H1 (cell line): ENCODE measurements at regions of chr15 and their contacts with region 1.

Region 1: GRCh38 chr15:51776952-51777574 is 25.7 kb downstream of the TMOD2 start:
- DNase-seq: peak in 1 of 2 experiments; percentile 63
- H3K4me3 ChIP-seq: no peak overlapping the region
- H3K27ac ChIP-seq: no peak overlapping the region
- H3K4me1 ChIP-seq: peaks cover 0 to 2% (median 0%) of the 10 kb centered on the region in 4 experiments; a peak in 2 of 7 replicates
- H3K27me3 ChIP-seq: no peaks in the 10 kb centered on the region
- CTCF ChIP-seq: peak in 2 of 3 experiments; percentile 85 to 87; a peak in 3 of 4 replicates
- EP300 ChIP-seq: no peak
- POLR2A ChIP-seq: no peak
- RAD21 ChIP-seq: peak; percentile 61 to 71

Region 2: GRCh38 chr15:51641528-51642130 is 135.4 kb before region 1 on chr15:
- CTCF ChIA-PET with region 1: interaction called, 243 read pairs
- POLR2A ChIA-PET with region 1: no interaction called
- DNase-seq: no peak
- H3K4me3 ChIP-seq: no peak overlapping the region
- H3K27ac ChIP-seq: no peak overlapping the region
- H3K4me1 ChIP-seq: no peaks in the 10 kb centered on the region
- H3K27me3 ChIP-seq: no peaks in the 10 kb centered on the region; a peak in 2 of 7 replicates
- CTCF ChIP-seq: no peak
- EP300 ChIP-seq: no peak
- POLR2A ChIP-seq: no peak
- RAD21 ChIP-seq: no peak

Region 3: DNA sequence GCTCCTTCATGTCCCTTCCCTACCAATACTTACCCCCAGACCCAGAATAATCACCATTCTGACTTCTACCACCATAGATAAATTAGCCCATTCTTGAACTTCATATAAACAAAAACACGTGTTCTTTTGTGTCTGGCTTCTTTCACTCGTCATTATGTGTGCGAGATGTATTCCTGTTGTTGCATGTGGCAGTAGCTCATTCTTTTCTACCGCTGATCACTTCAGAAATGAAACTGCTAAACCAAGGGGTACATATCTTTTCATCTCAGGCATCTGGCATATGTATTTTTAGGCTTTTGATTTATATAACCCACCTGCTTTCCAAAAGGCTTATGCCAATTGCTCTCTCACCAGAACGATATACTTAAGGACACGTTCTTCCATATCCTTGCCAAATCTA is 109.6 kb before region 1 on chr15:
- CTCF ChIA-PET with region 1: interaction called, 13 read pairs
- POLR2A ChIA-PET with region 1: no interaction called
- DNase-seq: no peak
- H3K4me3 ChIP-seq: no peak overlapping the region
- H3K27ac ChIP-seq: no peak overlapping the region
- H3K4me1 ChIP-seq: peaks cover 0 to 3% (median 0%) of the 10 kb centered on the region in 4 experiments; a peak in 1 of 7 replicates
- H3K27me3 ChIP-seq: no peaks in the 10 kb centered on the region
- CTCF ChIP-seq: no peak
- EP300 ChIP-seq: no peak
- POLR2A ChIP-seq: no peak
- RAD21 ChIP-seq: no peak

Region 4: DNA sequence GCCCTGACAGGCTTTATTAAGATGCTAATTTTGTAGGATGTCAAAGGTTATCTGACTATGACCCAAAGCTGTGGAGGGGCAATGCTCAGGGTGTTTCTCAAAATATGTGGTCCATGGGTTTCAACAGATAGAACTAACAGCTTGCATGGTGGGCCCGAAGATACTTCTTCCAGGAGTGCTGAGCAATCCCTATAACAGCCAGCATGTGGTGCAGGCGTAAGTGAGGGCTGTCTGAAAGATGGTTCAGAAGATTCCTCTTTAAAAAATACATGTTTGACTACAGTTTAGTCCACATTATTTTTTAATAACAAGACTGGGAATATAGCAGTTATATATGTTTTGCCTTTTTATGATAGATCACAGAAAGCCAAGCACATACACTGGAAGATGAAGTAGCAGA is 88.2 kb before region 1 on chr15:
- CTCF ChIA-PET with region 1: interaction called, 34 read pairs
- POLR2A ChIA-PET with region 1: no interaction called
- DNase-seq: no peak
- H3K4me3 ChIP-seq: no peak overlapping the region
- H3K27ac ChIP-seq: no peak overlapping the region
- H3K4me1 ChIP-seq: 0 out of 7 replicates have a peak, but pooled peaks cover 0 to 2% (median 0%) of the 10 kb centered on the region in 4 experiments
- H3K27me3 ChIP-seq: no peaks in the 10 kb centered on the region
- CTCF ChIP-seq: peak in 2 of 3 experiments; percentile 18 to 20; a peak in 1 of 4 replicates
- EP300 ChIP-seq: no peak
- POLR2A ChIP-seq: no peak
- RAD21 ChIP-seq: peak in 1 of 2 experiments; percentile 4; a peak in 1 of 4 replicates

Region 5: GRCh38 chr15:51759557-51760070 is 17.4 kb before region 1 on chr15:
- CTCF ChIA-PET with region 1: interaction called, 32 read pairs
- POLR2A ChIA-PET with region 1: no interaction called
- DNase-seq: peak in 1 of 2 experiments; percentile 52
- H3K4me3 ChIP-seq: no peak overlapping the region
- H3K27ac ChIP-seq: no peak overlapping the region
- H3K4me1 ChIP-seq: no peaks in the 10 kb centered on the region
- H3K27me3 ChIP-seq: no peaks in the 10 kb centered on the region; a peak in 2 of 7 replicates
- CTCF ChIP-seq: peak; percentile 52 to 79 (median 62)
- EP300 ChIP-seq: no peak
- POLR2A ChIP-seq: no peak
- RAD21 ChIP-seq: peak; percentile 52 to 66

Region 6: DNA sequence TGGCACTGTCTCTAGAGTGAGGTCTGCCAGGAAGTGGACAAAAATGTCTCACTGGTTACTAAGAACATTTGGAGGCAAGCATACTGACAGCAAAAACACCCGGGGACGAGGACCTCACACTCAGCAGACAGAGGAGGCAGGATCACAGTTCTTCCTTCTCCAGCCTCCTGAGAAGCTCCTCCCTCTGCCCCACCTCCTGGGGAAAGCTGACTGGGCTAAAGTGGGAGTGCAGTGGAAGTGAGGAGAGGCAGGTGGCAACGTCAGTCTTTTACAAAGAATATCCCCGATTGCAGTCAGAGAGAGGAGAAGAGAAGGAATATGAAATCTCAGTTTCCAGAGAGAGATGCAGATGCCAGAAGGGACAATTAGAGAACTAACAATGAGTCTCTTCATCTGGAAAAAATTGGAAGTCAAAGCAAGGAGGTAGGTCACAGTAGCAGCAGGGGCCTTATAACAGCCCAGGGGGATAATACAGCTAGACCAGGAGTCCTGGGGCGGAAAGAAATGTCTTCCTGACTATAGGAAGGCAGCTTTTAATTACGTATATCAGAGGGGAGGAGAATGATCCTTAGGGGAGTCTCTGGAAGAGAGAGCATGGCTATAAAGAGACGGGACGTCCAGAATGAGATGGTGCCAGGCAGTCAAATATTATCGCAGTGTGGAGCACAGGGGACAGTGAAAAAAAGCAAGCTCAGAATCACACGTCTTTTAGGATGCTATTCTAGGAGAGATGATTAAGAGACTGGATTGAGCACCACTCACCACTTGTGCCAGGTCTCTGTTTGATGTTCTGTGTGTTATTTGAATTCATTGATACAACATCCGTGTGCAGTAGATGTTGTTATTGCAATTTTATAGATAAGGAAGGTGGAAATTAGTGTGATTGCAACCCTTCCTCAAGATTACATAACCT is 147.3 kb after region 1 on chr15:
- CTCF ChIA-PET with region 1: interaction called, 11 read pairs
- POLR2A ChIA-PET with region 1: no interaction called
- DNase-seq: peak in 1 of 2 experiments; percentile 55
- H3K4me3 ChIP-seq: no peak overlapping the region
- H3K27ac ChIP-seq: no peak overlapping the region
- H3K4me1 ChIP-seq: peaks cover 0 to 2% (median 0%) of the 10 kb centered on the region in 4 experiments; a peak in 1 of 7 replicates
- H3K27me3 ChIP-seq: no peaks in the 10 kb centered on the region
- CTCF ChIP-seq: no peak
- EP300 ChIP-seq: no peak
- POLR2A ChIP-seq: no peak
- RAD21 ChIP-seq: no peak; a peak in 1 of 4 replicates

Region 7: DNA sequence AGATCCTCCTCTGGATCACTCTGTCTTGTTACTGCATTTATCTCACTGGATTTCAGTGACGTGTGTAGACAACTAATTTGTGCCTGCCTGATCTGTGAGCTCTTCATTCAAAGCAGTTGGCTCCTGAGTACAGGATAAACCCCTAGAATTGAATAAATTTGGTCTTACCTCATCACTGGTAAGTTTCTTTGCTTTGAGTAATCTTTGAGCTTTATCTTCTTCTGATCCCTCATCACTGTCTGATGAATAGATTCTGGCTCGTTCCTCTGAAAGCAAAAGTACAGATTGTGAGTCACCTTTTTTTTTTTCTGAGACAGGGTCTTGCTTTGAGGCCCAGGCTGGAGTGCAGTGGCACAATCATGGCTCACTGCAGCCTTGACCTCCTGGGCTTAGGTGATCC is 170.1 kb after region 1 on chr15:
- CTCF ChIA-PET with region 1: no interaction called
- POLR2A ChIA-PET with region 1: no interaction called
- DNase-seq: no peak
- H3K4me3 ChIP-seq: no peak overlapping the region
- H3K27ac ChIP-seq: no peak overlapping the region
- H3K4me1 ChIP-seq: no peaks in the 10 kb centered on the region
- H3K27me3 ChIP-seq: no peaks in the 10 kb centered on the region
- CTCF ChIP-seq: no peak
- EP300 ChIP-seq: no peak
- POLR2A ChIP-seq: no peak
- RAD21 ChIP-seq: no peak